ENCODE measurements at regions of chr15 and their contacts with region 1.

Region 1: GRCh38 chr15:41557673-41558399 is 1.2 kb upstream of the TYRO3 start:
- DNase-seq: peak; percentile 84
- ATAC-seq: peak; percentile 85
- H3K4me3 Mint-ChIP-seq: peak overlapping the region; percentile 69
- H3K27ac Mint-ChIP-seq: peak overlapping the region; percentile 69
- H3K4me1 Mint-ChIP-seq: peaks cover 14% of the 10 kb centered on the region
- H3K27me3 Mint-ChIP-seq: peaks cover 14% of the 10 kb centered on the region
- CTCF ChIP-seq: peak; percentile 83

Region 2: DNA sequence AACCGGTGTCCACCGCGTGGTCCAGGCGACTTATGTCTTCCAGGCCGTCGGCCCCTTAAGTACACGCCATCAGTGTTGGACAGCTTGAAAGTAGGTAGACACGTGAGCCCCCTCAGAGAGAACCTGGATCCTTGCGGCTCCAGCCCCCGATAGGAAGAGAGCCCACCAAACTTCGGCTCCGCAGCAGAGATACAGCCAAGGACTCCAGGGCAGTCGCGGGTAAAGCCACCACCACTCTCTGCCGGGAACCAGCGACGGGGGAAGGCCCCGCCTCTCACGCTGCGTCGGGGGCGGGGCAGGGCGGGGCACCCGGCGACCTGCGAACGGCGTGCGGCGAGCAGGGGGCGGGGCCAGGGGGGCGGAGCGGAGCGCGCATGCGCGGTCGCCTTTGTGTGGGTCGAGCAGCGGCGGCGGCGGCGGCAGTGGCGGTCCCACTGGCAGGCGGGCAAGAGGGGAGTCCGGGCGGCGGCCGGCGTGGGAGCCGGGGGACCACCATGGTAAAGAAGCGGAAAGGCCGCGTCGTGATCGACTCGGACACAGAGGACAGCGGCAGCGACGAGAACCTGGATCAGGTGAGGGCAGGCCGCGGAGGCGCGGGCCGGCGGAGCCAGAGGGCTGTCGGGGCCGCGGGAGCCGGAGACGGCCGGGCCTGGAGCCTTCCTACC is 141.0 kb before region 1 on chr15 and contains the start of gene RTF1:
- CTCF ChIA-PET with region 1: no interaction called
- POLR2A ChIA-PET with region 1: no interaction called
- intact Hi-C with region 1: no loop called
- DNase-seq: peak; percentile 96
- ATAC-seq: peak; percentile 97
- H3K4me3 Mint-ChIP-seq: peak within 1 kb of the TSS; percentile 92
- H3K27ac Mint-ChIP-seq: peak within 1 kb of the TSS; percentile 86
- H3K4me1 Mint-ChIP-seq: peaks cover 30% of the 10 kb centered on the region
- H3K27me3 Mint-ChIP-seq: no peaks in the 10 kb centered on the region
- CTCF ChIP-seq: no peak
- total RNA-seq, gene RTF1: 26.8 to 30.0 TPM

Region 3: GRCh38 chr15:41506796-41507341 is 51.0 kb before region 1 on chr15:
- CTCF ChIA-PET with region 1: no interaction called
- POLR2A ChIA-PET with region 1: no interaction called
- intact Hi-C with region 1: no loop called
- DNase-seq: no peak
- ATAC-seq: peak; percentile 35
- H3K4me3 Mint-ChIP-seq: no peak overlapping the region
- H3K27ac Mint-ChIP-seq: no peak overlapping the region
- H3K4me1 Mint-ChIP-seq: peaks cover 7% of the 10 kb centered on the region
- H3K27me3 Mint-ChIP-seq: peaks cover 40% of the 10 kb centered on the region
- CTCF ChIP-seq: no peak

Region 4: GRCh38 chr15:41544650-41545015 is 13.2 kb before region 1 on chr15:
- CTCF ChIA-PET with region 1: interaction called, 13 read pairs
- POLR2A ChIA-PET with region 1: interaction called, 11 read pairs
- intact Hi-C with region 1: no loop called
- DNase-seq: peak; percentile 45
- ATAC-seq: no peak
- H3K4me3 Mint-ChIP-seq: peak overlapping the region; percentile 97
- H3K27ac Mint-ChIP-seq: peak overlapping the region; percentile 93
- H3K4me1 Mint-ChIP-seq: peaks cover 15% of the 10 kb centered on the region
- H3K27me3 Mint-ChIP-seq: peaks cover 2% of the 10 kb centered on the region
- CTCF ChIP-seq: no peak

Region 5: DNA sequence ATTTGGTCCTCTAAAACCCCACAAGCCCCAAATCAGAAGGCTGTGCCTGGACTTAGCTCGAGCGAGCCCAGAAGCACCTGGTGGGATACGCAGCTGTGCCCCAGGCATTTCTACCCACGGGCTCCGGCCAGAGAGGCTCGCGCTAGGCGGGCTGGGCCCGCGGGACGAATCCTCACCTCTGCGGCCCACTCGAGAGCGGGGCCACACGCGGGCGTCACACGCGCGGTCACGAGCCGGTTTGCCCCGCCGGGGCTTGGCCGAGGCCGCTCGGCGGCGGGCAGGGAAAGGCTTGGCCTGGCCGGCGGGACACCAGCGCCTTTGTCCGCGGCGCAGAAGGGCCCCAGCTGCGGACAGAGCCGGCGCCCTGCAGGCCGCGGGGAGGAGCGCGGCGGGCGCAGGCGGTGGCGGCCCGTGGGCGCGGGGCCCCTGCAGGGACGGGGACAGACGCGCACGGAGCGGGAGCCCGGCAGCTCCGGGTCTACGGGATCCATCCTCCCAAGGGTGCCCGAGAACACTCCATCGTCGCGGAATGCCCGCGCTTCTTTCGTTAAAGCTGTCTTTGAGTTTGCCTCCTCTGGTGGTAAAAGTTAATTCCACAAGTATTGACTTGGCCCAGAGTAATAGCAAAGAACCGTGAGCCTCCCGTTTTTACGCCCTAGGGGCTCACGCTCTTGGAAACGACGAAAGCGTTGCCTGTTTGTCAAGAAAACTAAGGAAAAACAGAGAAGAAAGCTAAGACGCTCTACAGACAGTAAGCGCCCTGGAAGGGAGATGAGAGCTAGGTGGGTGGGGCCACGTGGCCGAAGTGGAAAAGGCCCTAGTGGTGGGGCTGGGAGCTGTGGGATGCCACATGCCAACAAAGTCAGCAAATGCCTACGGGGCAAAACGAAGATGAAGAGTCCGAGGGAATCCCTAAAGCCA is 27.6 kb after region 1 on chr15:
- CTCF ChIA-PET with region 1: interaction called, 13 read pairs
- POLR2A ChIA-PET with region 1: no interaction called
- intact Hi-C with region 1: no loop called
- DNase-seq: peak; percentile 45
- ATAC-seq: peak; percentile 53
- H3K4me3 Mint-ChIP-seq: peak overlapping the region; percentile 56
- H3K27ac Mint-ChIP-seq: no peak overlapping the region
- H3K4me1 Mint-ChIP-seq: peaks cover 6% of the 10 kb centered on the region
- H3K27me3 Mint-ChIP-seq: peaks cover 30% of the 10 kb centered on the region
- CTCF ChIP-seq: peak; percentile 29

Region 6: DNA sequence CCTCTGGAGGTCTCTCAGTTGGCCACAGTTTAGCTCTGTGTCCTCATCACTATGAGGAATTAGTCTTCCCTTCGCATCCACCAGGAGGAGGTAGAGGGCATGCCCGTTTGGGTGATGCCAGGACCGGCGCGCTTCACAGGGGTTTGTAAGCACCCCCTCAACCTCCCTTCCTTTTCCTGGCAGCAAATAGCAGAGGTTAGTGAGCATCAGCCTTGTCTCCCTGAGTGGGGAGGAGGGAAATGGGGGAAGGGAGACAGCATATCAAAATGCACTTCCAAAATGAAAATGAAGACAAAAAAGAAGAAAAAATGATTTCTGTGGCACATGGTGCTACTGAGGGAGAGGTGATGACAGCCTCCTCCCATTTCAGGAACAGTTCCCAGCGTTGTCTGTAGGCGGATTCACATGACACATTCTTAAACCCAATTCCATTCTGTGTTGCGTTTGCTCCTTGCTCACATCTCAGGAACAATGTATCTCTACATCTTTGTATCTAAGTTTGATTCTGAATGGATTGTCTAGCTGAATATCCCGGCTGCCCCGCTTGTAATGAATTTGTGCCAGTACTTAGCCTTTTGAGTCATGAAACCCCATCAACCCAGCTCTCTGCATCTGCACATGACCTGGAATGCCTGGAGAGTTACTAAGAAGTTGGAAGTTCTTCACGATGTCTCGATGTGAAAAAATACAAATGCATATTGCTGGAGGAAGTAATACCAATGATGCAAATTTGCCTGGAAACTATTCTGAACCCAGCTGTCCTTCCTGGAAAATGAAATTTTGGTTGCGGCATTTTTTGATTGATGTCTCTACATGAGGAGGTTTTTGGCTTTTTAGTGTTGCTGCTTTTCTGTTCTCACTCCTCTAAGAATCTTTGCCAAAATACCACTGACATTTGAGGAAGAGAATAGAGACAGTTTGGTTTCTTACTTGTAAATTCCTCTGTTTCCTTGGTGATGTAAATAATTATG is 46.4 kb after region 1 on chr15:
- CTCF ChIA-PET with region 1: interaction called, 17 read pairs
- POLR2A ChIA-PET with region 1: no interaction called
- intact Hi-C with region 1: no loop called
- DNase-seq: peak; percentile 69
- ATAC-seq: peak; percentile 97
- H3K4me3 Mint-ChIP-seq: peak overlapping the region; percentile 48
- H3K27ac Mint-ChIP-seq: no peak overlapping the region
- H3K4me1 Mint-ChIP-seq: peaks cover 10% of the 10 kb centered on the region
- H3K27me3 Mint-ChIP-seq: peaks cover 7% of the 10 kb centered on the region
- CTCF ChIP-seq: peak; percentile 79